BJ (cell line): ENCODE measurements at regions of chr15 and their contacts with region 1.

Region 1: GRCh38 chr15:83310521-83311472 is 26.3 kb upstream of the BNC1 start:
- DNase-seq: no peak
- H3K4me3 ChIP-seq: no peak overlapping the region
- H3K27me3 ChIP-seq: no peaks in the 10 kb centered on the region
- CTCF ChIP-seq: no peak

Region 2: GRCh38 chr15:83352119-83352518 is 41.3 kb after region 1 on chr15:
- CTCF ChIA-PET with region 1: no interaction called
- POLR2A ChIA-PET with region 1: interaction called, 22 read pairs
- DNase-seq: no peak
- H3K4me3 ChIP-seq: no peak overlapping the region
- H3K27me3 ChIP-seq: peaks cover 2% of the 10 kb centered on the region; the same call in 1 of the 2 replicates
- CTCF ChIP-seq: no peak

Region 3: DNA sequence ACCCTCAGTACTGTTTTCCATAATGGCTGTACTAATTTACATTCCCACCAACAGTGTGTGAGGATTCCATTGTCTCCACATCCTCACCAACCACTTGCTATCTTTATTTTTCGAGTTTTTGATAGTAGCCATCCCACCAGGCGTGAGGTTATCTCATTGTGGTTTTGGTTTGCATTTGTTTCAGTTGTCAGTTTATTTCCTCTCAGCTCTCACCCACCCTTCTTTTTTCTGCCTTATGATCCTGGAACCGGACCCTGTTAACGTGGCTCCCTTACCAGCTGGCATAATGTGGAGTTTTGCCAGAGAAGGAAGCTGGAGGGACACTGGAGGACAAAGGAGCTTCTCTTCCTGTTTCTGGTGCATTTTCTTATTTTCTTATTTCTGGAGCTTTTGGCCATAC is 111.3 kb after region 1 on chr15:
- CTCF ChIA-PET with region 1: no interaction called
- POLR2A ChIA-PET with region 1: no interaction called
- DNase-seq: no peak
- H3K4me3 ChIP-seq: no peak overlapping the region
- H3K27me3 ChIP-seq: no peaks in the 10 kb centered on the region
- CTCF ChIP-seq: no peak